Activated B cell treated with CpG ODN at 0.5 μM for 24 hours (primary cell): ENCODE measurements at regions of chr19 and their contacts with region 1.

Region 1: GRCh38 chr19:28878862-28879566 is 333.9 kb downstream of the UQCRFS1 start:
- DNase-seq: peak; percentile 18
- ATAC-seq: no peak
- H3K4me3 Mint-ChIP-seq: no peak overlapping the region
- H3K27ac Mint-ChIP-seq: no peak overlapping the region
- H3K4me1 Mint-ChIP-seq: peaks cover 7% of the 10 kb centered on the region
- H3K27me3 Mint-ChIP-seq: no peaks in the 10 kb centered on the region
- CTCF ChIP-seq: no peak

Region 2: GRCh38 chr19:28737021-28737895 is 141.8 kb before region 1 on chr19:
- CTCF ChIA-PET with region 1: interaction called, 5 read pairs
- POLR2A ChIA-PET with region 1: no interaction called
- intact Hi-C with region 1: loop called (anchors 2 kb)
- DNase-seq: no peak
- ATAC-seq: no peak
- H3K4me3 Mint-ChIP-seq: no peak overlapping the region
- H3K27ac Mint-ChIP-seq: no peak overlapping the region
- H3K4me1 Mint-ChIP-seq: peaks cover 3% of the 10 kb centered on the region
- H3K27me3 Mint-ChIP-seq: no peaks in the 10 kb centered on the region
- CTCF ChIP-seq: no peak

Region 3: GRCh38 chr19:28858933-28859332 is 20.1 kb before region 1 on chr19:
- CTCF ChIA-PET with region 1: no interaction called
- POLR2A ChIA-PET with region 1: no interaction called
- intact Hi-C with region 1: no loop called
- DNase-seq: no peak
- ATAC-seq: no peak
- H3K4me3 Mint-ChIP-seq: no peak overlapping the region
- H3K27ac Mint-ChIP-seq: no peak overlapping the region
- H3K4me1 Mint-ChIP-seq: no peaks in the 10 kb centered on the region
- H3K27me3 Mint-ChIP-seq: no peaks in the 10 kb centered on the region
- CTCF ChIP-seq: no peak